Dendritic cell treated with granulocyte-macrophage colony-stimulating factor and Interleukin-4, amounts not matched to agents 40 ng/mL and 50 ng/mL, for 4 days (primary cell): ENCODE measurements at regions of chr10 and their contacts with region 1.

Region 1: GRCh38 chr10:102072673-102073527 is 7.8 kb downstream of the HPS6 start:
- H3K4me3 Mint-ChIP-seq: no peak overlapping the region
- H3K27ac Mint-ChIP-seq: no peak overlapping the region
- H3K4me1 Mint-ChIP-seq: peaks cover 32% of the 10 kb centered on the region
- H3K27me3 Mint-ChIP-seq: peaks cover 2% of the 10 kb centered on the region

Region 2: DNA sequence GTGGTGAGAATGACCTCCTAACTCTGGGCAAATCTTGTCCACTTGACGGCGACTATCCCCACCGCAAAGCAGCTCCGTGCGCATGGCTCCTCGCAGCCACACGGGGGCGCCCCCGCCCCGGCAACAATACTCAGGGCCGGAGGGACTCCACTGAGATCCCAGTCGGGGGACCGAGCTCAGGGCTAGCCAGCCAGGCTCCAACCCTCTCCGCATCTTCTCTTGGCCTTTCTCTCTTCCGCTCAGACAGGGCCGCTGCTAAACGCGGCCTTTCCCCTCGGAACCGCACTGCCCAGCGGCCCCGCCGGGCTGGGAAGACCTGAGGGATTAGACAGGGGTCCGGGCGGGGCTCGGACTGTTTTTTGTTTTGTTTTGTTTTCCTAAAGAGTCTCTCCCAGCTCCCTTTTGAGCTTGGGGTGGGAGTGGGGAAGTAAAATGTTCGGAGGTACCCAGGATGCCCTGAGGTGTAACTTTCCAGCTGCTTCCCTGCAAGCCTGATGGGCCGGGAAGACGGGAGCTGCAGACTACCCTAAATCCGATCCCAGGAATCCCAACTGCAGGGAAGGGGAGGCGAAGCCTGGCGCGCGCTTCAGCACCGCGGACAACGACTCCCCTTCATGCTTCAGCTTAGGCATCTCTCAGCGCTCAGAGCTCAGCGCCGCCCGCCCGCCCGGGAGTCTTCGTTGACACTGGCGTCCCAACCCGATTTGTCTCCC is 232.0 kb before region 1 on chr10:
- intact Hi-C with region 1: loop called (anchors 2 kb)
- H3K4me3 Mint-ChIP-seq: peak overlapping the region; percentile 69
- H3K27ac Mint-ChIP-seq: no peak overlapping the region
- H3K4me1 Mint-ChIP-seq: peaks cover 57% of the 10 kb centered on the region
- H3K27me3 Mint-ChIP-seq: peaks cover 32% of the 10 kb centered on the region

Region 3: DNA sequence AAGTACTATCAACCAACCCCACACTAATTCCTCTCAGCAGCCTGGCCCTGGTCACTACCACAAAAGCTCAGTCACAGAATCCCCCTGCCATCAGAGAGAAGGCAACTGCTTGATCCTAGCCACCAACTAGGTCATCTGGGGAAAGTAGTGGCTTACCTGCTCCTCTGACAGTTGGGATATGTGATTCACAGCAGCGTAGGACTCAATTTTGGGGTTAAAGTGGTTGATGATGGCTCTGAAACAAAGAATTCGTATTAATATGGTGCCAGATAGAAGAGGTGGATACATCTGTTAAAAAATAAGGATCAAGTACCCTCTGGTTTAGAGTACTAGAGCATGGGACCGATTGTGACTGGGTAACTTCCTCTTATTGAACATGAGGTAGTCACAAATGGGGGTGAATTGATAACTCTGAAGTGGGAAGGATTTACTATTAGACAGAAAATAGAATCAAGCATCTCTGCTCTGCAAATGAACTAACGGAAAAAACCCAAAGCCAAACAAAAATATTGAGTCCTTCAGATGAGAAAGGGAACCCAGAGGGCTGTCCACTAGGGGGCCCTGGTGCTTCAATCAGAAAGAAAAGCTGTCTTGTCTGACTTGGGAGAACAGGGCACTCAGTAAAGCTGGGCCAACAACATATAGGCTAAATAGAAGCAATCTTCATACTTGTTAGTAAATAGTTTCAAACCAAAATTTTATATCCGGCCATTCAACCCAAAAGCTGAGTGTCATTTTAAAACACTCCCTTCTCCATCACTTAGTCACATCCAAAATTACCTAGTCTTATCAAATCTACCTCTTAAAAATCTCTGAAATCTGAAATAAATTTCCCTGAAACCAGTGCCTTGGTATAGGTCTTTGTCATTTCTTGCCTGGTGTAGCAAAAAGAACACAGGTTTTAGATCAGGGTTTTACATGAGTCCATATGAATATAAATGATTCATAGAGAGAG is 183.4 kb before region 1 on chr10:
- intact Hi-C with region 1: loop called (anchors 1 kb)
- H3K4me3 Mint-ChIP-seq: no peak overlapping the region
- H3K27ac Mint-ChIP-seq: no peak overlapping the region
- H3K4me1 Mint-ChIP-seq: peaks cover 25% of the 10 kb centered on the region
- H3K27me3 Mint-ChIP-seq: no peaks in the 10 kb centered on the region

Region 4: GRCh38 chr10:102713814-102714620 is 641.1 kb after region 1 on chr10 and contains the start of gene ARL3:
- intact Hi-C with region 1: no loop called
- H3K4me3 Mint-ChIP-seq: peak within 1 kb of the TSS; percentile 88
- H3K27ac Mint-ChIP-seq: peak within 1 kb of the TSS; percentile 96
- H3K4me1 Mint-ChIP-seq: peaks cover 49% of the 10 kb centered on the region
- H3K27me3 Mint-ChIP-seq: no peaks in the 10 kb centered on the region